ENCODE measurements at regions of chr14 and their contacts with region 1.

Region 1: DNA sequence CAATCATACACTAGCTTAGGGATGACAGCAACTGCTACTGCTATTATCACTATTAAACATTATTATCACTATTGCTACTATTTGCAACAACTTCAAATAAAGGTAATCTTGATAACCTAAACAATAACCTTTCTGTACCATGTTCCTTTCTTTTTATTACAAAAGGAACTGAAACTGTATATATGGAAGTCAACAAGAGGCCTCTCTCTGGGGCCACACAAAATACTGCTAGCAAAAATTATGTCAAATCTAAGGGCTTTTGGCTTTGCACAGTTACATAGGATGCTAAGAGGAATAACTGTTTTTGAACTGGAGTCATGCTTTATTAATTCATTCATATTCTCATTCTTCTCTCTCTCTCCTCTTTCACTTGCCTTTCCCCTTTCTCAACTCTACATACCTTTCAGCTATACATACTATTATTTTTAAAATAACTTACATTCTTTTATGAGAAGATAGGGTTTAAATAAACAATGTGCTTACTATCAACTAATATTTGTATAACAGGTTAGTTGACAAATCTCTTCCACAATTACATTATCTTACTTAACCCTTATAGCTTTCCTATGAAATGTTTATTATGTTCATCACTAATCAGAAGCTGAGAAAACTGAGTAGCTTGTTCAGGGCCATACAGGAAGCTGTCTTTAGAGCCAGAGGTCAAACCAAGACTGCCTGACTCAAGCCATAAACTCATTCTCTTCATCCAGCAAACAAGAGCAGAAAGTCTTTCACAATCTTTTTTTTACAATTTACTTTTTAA is 25.7 kb downstream of the SPTSSA start:
- DNase-seq: no peak
- H3K4me3 ChIP-seq: no peak overlapping the region
- H3K27ac ChIP-seq: peak overlapping the region; percentile 89
- H3K4me1 ChIP-seq: no peaks in the 10 kb centered on the region
- H3K27me3 ChIP-seq: no peaks in the 10 kb centered on the region
- CTCF ChIP-seq: no peak

Region 2: DNA sequence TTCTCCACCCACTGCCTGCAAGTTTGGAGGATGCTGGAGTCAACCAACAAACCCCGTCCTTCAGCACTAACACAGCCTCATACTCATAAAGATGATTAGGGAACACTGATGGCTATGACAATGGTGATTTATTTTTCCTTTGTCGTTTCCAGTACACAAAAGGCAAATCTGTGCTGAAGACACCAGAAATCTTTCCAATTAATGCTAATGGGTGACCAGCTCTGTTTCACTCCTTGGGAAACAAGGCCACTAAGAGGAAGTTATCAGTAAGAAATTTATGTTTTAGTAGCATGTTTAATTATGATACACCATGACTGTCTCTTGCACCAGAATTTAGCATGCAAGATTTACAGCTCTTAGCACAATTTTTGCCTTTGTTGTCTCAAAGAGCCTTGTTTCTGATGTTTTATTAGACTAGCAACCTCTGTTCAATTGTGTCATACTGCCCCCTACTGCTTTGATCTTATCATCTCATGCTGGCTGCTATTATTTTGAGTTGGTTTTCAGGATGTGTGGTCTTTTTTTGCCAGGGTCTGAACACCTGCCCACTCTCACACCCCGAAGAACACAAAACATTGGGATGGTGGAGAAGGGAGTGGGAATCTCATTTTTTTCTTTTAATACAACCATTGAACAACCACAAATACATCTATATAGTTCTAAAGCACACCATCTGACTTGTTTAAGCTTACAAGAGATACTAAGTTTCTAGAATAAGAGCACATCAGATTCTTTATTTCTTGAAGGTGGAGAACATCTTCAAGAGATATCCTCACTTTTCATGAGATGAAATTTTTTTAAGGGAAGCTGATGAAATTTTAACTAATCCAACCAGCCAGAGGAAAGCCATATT is 135.2 kb before region 1 on chr14:
- intact Hi-C with region 1: no loop called
- DNase-seq: peak; percentile 37
- H3K4me3 ChIP-seq: no peak overlapping the region
- H3K27ac ChIP-seq: no peak overlapping the region
- H3K4me1 ChIP-seq: no peaks in the 10 kb centered on the region
- H3K27me3 ChIP-seq: no peaks in the 10 kb centered on the region
- CTCF ChIP-seq: peak; percentile 51

Region 3: GRCh38 chr14:34374980-34375740 is 61.1 kb before region 1 on chr14:
- intact Hi-C with region 1: loop called (anchors 10 kb)
- DNase-seq: no peak
- H3K4me3 ChIP-seq: no peak overlapping the region
- H3K27ac ChIP-seq: peak overlapping the region; percentile 57
- H3K4me1 ChIP-seq: peaks cover 3% of the 10 kb centered on the region
- H3K27me3 ChIP-seq: no peaks in the 10 kb centered on the region
- CTCF ChIP-seq: no peak

Measured in colonic mucosa (tissue), 4 donors.